Caco-2 (cell line): ENCODE measurements at regions of chr4 and their contacts with region 1.

Region 1: DNA sequence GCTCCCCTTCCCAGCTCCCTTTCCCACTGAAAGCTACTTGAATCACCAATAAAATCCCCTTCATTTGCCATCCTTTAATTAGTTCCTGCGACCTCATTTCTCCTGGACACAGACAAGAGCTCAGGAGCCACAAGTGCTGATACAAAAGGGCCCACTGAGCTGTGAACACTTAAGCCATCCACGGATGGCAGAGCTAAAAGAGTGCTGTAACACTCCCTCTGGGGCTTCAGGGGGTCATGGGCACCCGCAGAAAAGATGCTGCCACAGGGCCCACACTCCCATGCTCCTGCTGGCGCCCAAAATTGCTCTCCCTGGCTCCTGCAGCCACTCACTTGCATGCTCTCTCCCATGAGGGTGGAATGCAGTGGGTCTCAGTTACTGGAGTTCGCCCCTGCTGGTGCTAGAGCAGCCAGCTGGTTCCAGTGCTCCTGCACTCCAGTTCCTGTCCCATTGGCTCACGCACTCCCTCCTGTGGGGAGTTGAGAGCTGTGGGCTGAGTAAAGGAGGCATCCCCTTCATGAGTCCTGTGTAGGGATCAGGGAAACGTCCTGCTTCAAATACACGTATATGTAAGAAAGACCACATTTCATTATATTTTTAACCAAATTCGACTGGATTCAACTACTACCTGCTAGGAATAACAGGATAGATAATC is 1291.0 kb downstream of the ARAP2 start:
- DNase-seq: peak; percentile 78 to 79
- H3K4me3 ChIP-seq: no peak overlapping the region
- H3K4me3 Mint-ChIP-seq: no peak overlapping the region
- H3K27ac Mint-ChIP-seq: no peak overlapping the region
- H3K4me1 ChIP-seq: no peaks in the 10 kb centered on the region
- H3K4me1 Mint-ChIP-seq: no peaks in the 10 kb centered on the region
- H3K27me3 ChIP-seq: no peaks in the 10 kb centered on the region
- H3K27me3 Mint-ChIP-seq: peaks cover 11% of the 10 kb centered on the region
- CTCF ChIP-seq: peak; percentile 65 to 76

Region 2: GRCh38 chr4:34766935-34767334 is 186.3 kb before region 1 on chr4:
- CTCF ChIA-PET with region 1: no interaction called
- POLR2A ChIA-PET with region 1: no interaction called
- intact Hi-C with region 1: loop called (anchors 2 kb)
- DNase-seq: no peak
- H3K4me3 ChIP-seq: no peak overlapping the region
- H3K4me3 Mint-ChIP-seq: no peak overlapping the region
- H3K27ac Mint-ChIP-seq: no peak overlapping the region
- H3K4me1 ChIP-seq: no peaks in the 10 kb centered on the region
- H3K4me1 Mint-ChIP-seq: no peaks in the 10 kb centered on the region
- H3K27me3 ChIP-seq: no peaks in the 10 kb centered on the region
- H3K27me3 Mint-ChIP-seq: peaks cover 6% of the 10 kb centered on the region
- CTCF ChIP-seq: no peak

Region 3: DNA sequence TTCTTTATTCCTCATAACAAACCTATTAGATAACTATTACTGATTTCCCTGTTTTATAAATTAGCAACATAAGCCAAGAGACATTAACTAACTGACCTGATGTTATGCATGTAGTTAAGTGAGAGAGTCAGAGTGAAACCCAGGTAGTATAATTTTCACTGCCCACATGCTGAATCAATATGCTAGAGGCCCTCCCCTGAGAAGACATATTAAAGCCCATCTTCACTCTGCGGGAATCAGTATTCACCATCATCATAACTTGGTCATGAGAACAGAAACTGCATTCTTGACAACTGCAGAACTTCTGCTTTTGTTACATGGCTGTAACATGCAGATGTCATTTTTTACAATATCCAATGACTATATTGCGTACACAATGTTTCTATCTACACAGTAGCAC is 33.2 kb before region 1 on chr4:
- CTCF ChIA-PET with region 1: no interaction called
- POLR2A ChIA-PET with region 1: no interaction called
- intact Hi-C with region 1: no loop called
- DNase-seq: no peak
- H3K4me3 ChIP-seq: no peak overlapping the region
- H3K4me3 Mint-ChIP-seq: no peak overlapping the region
- H3K27ac Mint-ChIP-seq: no peak overlapping the region
- H3K4me1 ChIP-seq: no peaks in the 10 kb centered on the region
- H3K4me1 Mint-ChIP-seq: no peaks in the 10 kb centered on the region
- H3K27me3 ChIP-seq: no peaks in the 10 kb centered on the region
- H3K27me3 Mint-ChIP-seq: peaks cover 7% of the 10 kb centered on the region
- CTCF ChIP-seq: no peak